ENCODE measurements at regions of chr5 and their contacts with region 1.

Region 1: GRCh38 chr5:36875790-36876388 is 680 bp upstream of the NIPBL start:
- H3K4me3 Mint-ChIP-seq: peak overlapping the region; percentile 94
- H3K27ac Mint-ChIP-seq: peak overlapping the region; percentile 97
- H3K4me1 Mint-ChIP-seq: peaks cover 31% of the 10 kb centered on the region
- H3K27me3 Mint-ChIP-seq: no peaks in the 10 kb centered on the region

Region 2: DNA sequence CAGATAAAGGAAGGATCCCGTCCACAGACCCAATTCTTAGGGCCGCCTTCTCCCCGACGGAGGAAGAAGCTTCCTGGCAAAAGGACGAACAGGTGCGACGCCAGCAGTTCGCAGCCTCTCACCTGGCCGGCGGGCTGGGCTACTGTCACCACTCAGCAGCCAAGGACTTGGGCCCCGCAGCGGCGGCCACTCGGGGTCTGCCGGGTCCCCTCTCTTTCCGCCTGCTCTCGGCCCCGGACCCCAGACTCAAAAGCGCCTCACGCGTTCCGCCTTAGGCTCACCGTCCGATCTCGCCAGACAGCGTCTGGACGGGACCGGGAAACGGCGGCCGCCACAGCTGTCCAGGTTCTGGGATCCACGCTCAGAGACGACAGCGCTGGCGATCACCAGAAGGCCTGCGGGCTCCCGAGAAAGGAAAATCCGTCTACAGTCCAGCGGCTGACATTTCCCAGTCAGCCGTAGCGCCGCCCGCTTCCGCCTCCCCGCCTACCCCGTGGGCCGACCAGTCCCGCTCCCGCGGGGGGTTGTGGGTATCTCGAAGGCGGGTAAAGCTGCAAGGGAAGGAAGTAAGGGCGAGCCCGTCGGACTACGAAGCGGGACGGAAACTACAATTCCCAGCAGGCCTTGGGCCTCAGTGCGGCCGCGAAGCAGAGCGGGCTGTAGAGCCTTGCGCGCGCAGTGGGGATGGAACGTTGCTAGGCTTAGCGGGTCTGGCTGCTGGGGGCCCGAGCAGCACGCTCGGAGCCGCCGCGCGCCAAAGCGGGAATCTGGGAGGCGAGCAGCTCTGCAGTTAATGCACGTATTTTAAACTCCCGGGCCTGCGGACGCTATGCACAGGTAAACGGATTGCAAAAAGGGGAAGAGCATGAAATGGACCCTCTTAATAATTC is 724.2 kb before region 1 on chr5 and contains the starts of genes LMBRD2 and SKP2:
- intact Hi-C with region 1: loop called (anchors 5 kb)
- H3K4me3 Mint-ChIP-seq: peak within 1 kb of the TSS; percentile 94
- H3K27ac Mint-ChIP-seq: peak within 1 kb of the TSS; percentile 90
- H3K4me1 Mint-ChIP-seq: peaks cover 58% of the 10 kb centered on the region
- H3K27me3 Mint-ChIP-seq: no peaks in the 10 kb centered on the region

Region 3: GRCh38 chr5:36241631-36242533 is 634.0 kb before region 1 on chr5 and contains the start of gene NADK2:
- intact Hi-C with region 1: loop called (anchors 5 kb)
- H3K4me3 Mint-ChIP-seq: peak within 1 kb of the TSS; percentile 89
- H3K27ac Mint-ChIP-seq: peak within 1 kb of the TSS; percentile 94
- H3K4me1 Mint-ChIP-seq: peaks cover 39% of the 10 kb centered on the region
- H3K27me3 Mint-ChIP-seq: no peaks in the 10 kb centered on the region

Region 4: DNA sequence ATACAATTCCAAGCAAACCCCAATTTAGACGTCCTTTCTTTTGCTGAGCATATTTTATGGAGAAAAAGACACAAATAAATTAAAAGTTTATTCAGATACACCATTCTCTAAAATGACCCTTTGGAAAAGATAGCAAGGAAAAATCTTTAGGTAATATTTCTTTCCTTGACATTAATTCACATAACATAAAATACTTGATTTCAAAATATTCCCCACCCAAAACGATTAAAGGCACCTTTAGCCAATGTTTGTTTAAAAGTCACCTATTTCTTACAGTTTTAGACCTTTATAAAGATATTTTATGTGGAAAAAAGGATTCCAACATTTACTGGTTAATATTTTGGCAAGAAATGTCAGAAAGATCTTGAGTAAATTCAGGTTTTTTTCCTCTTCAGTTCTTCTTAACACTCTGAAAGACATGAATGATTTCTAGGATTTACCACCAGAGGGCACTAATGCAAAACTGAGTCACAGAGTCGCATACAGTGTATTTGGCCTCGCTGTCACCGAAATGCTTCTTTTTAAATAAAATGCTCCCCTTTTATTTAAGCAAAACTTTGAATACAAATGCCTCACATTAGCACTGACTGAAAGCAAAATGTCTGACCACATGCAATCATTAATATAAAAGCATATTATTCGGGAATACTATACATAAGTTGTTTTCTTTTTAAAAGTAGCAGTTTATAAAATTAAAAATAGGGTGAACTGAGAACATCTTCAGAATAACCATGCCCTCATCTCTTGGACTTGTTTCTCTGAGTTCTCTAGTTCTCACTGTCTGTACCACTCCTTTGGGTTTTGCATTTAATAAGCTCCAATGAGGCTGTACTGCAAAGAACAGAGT is 147.0 kb before region 1 on chr5:
- intact Hi-C with region 1: loop called (anchors 2 kb)
- H3K4me3 Mint-ChIP-seq: no peak overlapping the region
- H3K27ac Mint-ChIP-seq: no peak overlapping the region
- H3K4me1 Mint-ChIP-seq: peaks cover 19% of the 10 kb centered on the region
- H3K27me3 Mint-ChIP-seq: no peaks in the 10 kb centered on the region

Region 5: GRCh38 chr5:36944607-36945225 is 68.8 kb after region 1 on chr5:
- intact Hi-C with region 1: loop called (anchors 2 kb)
- H3K4me3 Mint-ChIP-seq: no peak overlapping the region
- H3K27ac Mint-ChIP-seq: no peak overlapping the region
- H3K4me1 Mint-ChIP-seq: peaks cover 27% of the 10 kb centered on the region
- H3K27me3 Mint-ChIP-seq: no peaks in the 10 kb centered on the region